Aorta (tissue), 5 donors: ENCODE measurements at regions of chr2 and their contacts with region 1.

Region 1: GRCh38 chr2:207173660-207174059 is 7.9 kb upstream of the KLF7 start:
- DNase-seq: no peak
- ATAC-seq: no peak
- H3K4me3 ChIP-seq: no peak overlapping the region
- H3K27ac ChIP-seq: no peak overlapping the region
- H3K4me1 ChIP-seq: no peaks in the 10 kb centered on the region
- H3K27me3 ChIP-seq: no peaks in the 10 kb centered on the region

Region 2: DNA sequence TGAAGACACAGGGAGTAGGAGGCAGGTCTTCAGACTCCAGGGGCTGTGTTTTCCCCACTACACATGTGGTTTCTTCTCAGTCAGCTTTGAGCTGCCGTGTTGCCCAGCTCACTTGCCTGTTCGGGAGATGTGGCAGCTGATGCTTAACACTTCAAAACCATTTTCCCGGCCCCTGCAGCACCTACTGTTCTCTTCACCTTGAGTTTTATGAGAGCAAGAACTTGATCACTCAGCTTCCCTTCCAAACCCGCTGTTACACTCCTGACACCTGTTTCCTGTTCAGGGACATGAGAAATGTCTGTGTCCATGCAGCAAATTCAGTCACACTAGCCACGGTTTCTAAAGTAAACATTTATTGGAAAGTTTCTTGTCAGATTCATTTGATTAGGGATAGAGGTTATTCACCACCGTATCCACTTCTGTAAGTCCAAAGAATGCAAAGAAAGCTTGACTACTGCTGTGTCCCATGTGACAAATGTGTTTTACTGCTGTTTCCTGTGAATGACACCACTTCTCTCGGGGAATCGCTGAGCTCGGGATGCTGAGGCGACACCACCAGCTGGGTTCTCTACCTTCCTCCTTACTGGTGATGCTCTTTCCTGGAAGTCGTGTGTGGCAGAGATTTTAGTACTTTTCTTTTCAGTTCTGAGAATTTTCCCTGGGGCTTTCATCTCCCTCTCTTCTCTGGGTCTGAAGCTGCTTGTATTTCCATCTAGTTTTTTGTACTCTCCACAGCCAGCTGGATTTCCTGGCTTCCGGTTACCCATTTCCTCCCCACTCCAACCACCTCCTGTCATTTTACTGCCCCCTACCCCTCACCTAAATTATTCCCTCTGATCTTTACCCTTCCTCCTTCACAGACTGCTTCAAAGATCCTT is 99.6 kb before region 1 on chr2:
- intact Hi-C with region 1: no loop called
- DNase-seq: peak in 1 of 2 donors; percentile 51
- ATAC-seq: peak; percentile 53
- H3K4me3 ChIP-seq: no peak overlapping the region
- H3K27ac ChIP-seq: no peak overlapping the region
- H3K4me1 ChIP-seq: peaks cover 3 to 8% of the 10 kb centered on the region in 2 donors
- H3K27me3 ChIP-seq: no peaks in the 10 kb centered on the region

Region 3: GRCh38 chr2:207188626-207189419 is 15.2 kb after region 1 on chr2:
- intact Hi-C with region 1: loop called in 1 of 2 experiments (anchors 2 kb)
- DNase-seq: no peak
- ATAC-seq: no peak
- H3K4me3 ChIP-seq: no peak overlapping the region
- H3K27ac ChIP-seq: no peak overlapping the region
- H3K4me1 ChIP-seq: no peaks in the 10 kb centered on the region
- H3K27me3 ChIP-seq: no peaks in the 10 kb centered on the region